Activated CD4-positive, alpha-beta T cell treated with anti-CD3 and anti-CD28 coated beads, Interleukin-2, amount 10 ng/mL, durations not matched to agents 7 days and 5 days (primary cell): ENCODE measurements at regions of chr17 and their contacts with region 1.

Region 1: GRCh38 chr17:63478791-63479494 is 2.1 kb downstream of the ACE start:
- DNase-seq: peak; percentile 86
- H3K4me3 Mint-ChIP-seq: no peak overlapping the region
- H3K27ac Mint-ChIP-seq: no peak overlapping the region
- H3K4me1 Mint-ChIP-seq: peaks cover 20% of the 10 kb centered on the region
- H3K27me3 Mint-ChIP-seq: peaks cover 40% of the 10 kb centered on the region

Region 2: GRCh38 chr17:63425482-63425881 is 53.5 kb before region 1 on chr17:
- CTCF ChIA-PET with region 1: interaction called, 60 read pairs
- POLR2A ChIA-PET with region 1: no interaction called
- DNase-seq: peak; percentile 81
- H3K4me3 Mint-ChIP-seq: no peak overlapping the region
- H3K27ac Mint-ChIP-seq: no peak overlapping the region
- H3K4me1 Mint-ChIP-seq: peaks cover 53% of the 10 kb centered on the region
- H3K27me3 Mint-ChIP-seq: peaks cover 2% of the 10 kb centered on the region

Region 3: DNA sequence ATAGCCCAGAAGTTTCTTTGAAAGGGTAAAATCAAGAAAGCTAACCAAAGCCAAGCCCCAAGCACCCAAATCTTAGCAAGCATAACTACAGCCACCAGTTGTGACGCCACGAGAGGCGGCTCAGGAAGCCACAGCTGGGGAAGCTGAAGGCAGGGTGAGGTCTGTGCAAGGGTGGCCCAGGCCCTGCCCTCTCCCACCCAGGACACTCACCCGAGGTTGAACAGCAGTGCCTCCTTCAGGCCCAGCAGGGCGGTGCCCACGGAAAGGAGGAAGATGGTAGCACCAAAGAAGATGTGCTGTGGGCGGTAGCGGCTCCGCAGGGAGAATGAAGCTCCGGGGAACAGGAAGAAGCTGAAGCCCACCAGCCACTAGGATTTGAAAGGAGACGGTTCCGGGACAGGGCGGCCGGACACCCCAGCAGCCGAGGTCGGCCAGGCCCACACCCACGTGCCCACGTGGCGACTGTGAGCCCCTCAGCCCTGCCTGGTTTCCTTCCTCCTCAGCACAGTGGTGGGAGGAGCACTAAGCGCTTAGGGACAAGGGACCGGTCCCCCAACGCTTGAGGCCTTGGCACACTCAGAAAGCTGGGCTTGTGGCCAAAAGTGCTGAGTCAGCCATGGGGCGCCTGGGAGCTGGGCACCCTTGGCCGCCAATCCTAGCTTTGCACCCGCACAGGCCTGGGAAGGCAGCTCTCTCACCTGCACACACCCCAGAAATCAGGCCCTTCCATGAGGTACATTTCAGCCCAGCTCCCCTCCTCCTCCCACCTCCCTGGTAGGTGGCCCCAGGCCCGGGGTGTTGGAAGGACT is 43.9 kb before region 1 on chr17:
- CTCF ChIA-PET with region 1: interaction called, 12 read pairs
- POLR2A ChIA-PET with region 1: no interaction called
- DNase-seq: peak; percentile 75
- H3K4me3 Mint-ChIP-seq: no peak overlapping the region
- H3K27ac Mint-ChIP-seq: peak overlapping the region; percentile 88
- H3K4me1 Mint-ChIP-seq: peaks cover 62% of the 10 kb centered on the region
- H3K27me3 Mint-ChIP-seq: no peaks in the 10 kb centered on the region